ENCODE measurements at regions of chr13 and their contacts with region 1.

Region 1: DNA sequence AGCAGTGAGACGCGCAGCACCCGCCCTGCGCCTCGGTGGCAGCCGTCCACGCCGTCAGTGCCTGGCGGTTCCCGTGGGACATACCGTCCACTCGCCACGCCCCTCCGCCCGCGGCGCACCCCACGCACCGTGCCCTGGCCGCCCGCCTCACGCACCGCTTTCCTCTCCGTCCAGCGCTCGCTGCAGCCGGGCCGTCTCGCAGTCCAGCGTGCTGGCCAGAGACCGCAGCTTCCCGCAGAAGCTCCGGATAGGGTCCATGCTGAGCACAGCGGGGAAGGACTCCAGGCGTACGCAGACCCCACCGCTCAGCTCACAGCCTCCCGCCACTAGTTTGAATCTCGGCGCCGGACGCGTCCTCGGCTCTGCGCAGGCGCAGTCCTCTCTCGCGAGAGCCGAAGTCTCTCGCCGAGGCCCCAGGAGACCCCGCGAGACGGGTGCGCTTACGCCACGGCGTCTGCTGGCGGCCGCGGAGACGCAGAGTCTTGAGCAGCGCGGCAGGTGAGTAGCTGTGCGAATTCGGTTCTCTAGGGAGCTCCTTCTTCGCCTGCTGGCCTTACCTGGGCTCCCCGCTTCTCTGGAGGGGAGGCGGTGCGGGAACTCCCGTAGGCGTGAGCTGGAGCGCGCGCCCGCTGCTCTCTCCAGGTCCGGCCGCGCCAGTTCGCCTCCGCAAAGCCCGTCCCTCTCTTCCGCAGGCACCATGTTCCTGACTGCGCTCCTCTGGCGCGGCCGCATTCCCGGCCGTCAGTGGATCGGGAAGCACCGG is at the starts of genes MRPL57 and SKA3:
- DNase-seq: peak; percentile 95
- H3K4me3 Mint-ChIP-seq: peak within 1 kb of the TSS; percentile 99
- H3K27ac Mint-ChIP-seq: peak within 1 kb of the TSS; percentile 93
- H3K4me1 Mint-ChIP-seq: peaks cover 44% of the 10 kb centered on the region
- H3K27me3 Mint-ChIP-seq: no peaks in the 10 kb centered on the region
- total RNA-seq, gene MRPL57: 18.2 to 18.5 TPM
- total RNA-seq, gene SKA3: 33.2 to 34.7 TPM

Region 2: GRCh38 chr13:20773194-20774080 is 403.0 kb before region 1 on chr13 and contains the start of gene EEF1AKMT1:
- CTCF ChIA-PET with region 1: no interaction called
- POLR2A ChIA-PET with region 1: interaction called, 10 read pairs
- DNase-seq: peak; percentile 95
- H3K4me3 Mint-ChIP-seq: peak within 1 kb of the TSS; percentile 80
- H3K27ac Mint-ChIP-seq: peak within 1 kb of the TSS; percentile 99
- H3K4me1 Mint-ChIP-seq: peaks cover 35% of the 10 kb centered on the region
- H3K27me3 Mint-ChIP-seq: no peaks in the 10 kb centered on the region
- total RNA-seq, gene EEF1AKMT1: 7.9 TPM

Region 3: DNA sequence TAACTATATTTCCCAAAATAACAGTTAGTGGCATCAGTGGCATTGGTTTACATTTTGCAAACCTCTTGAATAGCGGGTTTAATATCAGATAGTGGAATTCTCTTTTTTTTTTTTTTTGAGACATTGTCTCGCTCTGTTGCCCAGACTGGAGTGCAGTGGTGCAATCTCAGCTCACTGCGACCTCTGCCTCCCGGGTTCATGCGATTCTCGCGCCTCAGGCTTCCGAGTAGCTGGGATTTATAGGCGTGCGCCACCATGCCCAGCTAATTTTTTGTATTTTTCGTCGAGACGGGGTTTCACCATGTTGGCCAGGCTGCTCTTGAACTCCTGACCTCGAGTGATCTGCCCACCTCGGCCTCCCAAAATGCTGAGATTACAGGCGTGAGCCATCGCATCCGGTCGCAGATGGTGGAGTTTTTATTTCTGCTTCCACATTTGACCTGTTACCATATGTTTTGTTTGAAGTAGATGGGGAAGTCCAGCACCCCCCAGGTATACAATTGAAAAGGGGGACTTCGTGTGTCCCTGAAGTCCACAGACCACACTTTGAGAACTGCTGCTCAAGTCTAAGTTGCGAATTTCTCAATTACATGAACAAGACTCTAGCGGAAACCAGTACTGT is 233.4 kb before region 1 on chr13:
- CTCF ChIA-PET with region 1: interaction called, 23 read pairs
- POLR2A ChIA-PET with region 1: interaction called, 3 read pairs
- DNase-seq: no peak
- H3K4me3 Mint-ChIP-seq: no peak overlapping the region
- H3K27ac Mint-ChIP-seq: no peak overlapping the region
- H3K4me1 Mint-ChIP-seq: peaks cover 12% of the 10 kb centered on the region
- H3K27me3 Mint-ChIP-seq: peaks cover 34% of the 10 kb centered on the region

Region 4: DNA sequence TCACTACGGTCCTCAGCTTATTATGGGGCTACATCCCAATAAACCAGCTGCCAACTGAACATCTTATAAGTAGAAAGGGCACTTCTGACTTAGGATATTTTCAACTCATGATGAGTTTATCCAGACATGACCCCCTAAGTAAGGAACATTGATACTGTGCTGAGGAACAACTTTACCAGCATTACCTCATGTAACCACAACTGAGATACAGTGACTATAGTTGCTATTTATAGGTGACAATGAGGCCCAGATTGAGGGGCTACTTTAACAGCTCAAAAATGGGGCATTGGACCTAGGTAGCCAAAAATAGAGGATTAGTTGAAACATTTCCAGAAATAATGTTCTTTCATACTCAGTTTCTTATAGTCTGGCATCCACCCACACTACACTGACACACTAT is 26.8 kb before region 1 on chr13:
- CTCF ChIA-PET with region 1: no interaction called
- POLR2A ChIA-PET with region 1: interaction called, 23 read pairs
- DNase-seq: no peak
- H3K4me3 Mint-ChIP-seq: no peak overlapping the region
- H3K27ac Mint-ChIP-seq: no peak overlapping the region
- H3K4me1 Mint-ChIP-seq: peaks cover under 1% of the 10 kb centered on the region
- H3K27me3 Mint-ChIP-seq: no peaks in the 10 kb centered on the region

Region 5: DNA sequence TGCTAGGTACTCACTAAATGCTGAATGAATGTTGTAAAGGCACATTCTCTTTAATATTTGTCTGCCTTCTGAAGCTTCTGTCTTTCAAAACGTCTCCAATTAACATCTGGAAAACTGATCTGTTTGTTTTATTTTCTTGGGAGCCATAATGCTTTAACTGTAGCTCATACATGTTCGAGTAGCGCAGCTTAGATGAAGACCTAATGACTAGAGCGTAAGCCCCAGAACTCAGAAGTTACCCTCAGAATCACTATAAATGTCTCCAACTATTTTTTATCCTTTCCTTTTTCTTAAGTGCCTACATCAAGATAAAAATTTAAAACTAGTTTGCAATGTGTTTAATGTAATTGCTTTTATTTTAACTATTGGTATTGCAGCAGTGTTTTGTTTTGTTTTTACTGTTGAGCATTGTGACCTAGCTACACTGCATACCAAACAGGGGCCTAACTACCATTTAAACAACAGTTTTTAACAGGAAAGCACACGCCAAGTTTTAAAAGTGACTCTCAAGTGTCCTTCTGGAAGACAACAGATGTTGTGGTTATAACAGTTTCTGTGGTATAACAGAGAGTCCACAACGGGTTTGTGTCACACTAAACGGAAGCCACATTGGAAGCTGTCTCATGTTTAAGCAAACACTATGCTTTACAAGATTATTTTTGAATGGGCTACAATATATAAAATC is 42.1 kb after region 1 on chr13:
- CTCF ChIA-PET with region 1: interaction called, 12 read pairs
- POLR2A ChIA-PET with region 1: interaction called, 24 read pairs
- DNase-seq: peak; percentile 49
- H3K4me3 Mint-ChIP-seq: peak overlapping the region; percentile 19
- H3K27ac Mint-ChIP-seq: peak overlapping the region; percentile 67
- H3K4me1 Mint-ChIP-seq: peaks cover 20% of the 10 kb centered on the region
- H3K27me3 Mint-ChIP-seq: peaks cover 51% of the 10 kb centered on the region

Region 6: DNA sequence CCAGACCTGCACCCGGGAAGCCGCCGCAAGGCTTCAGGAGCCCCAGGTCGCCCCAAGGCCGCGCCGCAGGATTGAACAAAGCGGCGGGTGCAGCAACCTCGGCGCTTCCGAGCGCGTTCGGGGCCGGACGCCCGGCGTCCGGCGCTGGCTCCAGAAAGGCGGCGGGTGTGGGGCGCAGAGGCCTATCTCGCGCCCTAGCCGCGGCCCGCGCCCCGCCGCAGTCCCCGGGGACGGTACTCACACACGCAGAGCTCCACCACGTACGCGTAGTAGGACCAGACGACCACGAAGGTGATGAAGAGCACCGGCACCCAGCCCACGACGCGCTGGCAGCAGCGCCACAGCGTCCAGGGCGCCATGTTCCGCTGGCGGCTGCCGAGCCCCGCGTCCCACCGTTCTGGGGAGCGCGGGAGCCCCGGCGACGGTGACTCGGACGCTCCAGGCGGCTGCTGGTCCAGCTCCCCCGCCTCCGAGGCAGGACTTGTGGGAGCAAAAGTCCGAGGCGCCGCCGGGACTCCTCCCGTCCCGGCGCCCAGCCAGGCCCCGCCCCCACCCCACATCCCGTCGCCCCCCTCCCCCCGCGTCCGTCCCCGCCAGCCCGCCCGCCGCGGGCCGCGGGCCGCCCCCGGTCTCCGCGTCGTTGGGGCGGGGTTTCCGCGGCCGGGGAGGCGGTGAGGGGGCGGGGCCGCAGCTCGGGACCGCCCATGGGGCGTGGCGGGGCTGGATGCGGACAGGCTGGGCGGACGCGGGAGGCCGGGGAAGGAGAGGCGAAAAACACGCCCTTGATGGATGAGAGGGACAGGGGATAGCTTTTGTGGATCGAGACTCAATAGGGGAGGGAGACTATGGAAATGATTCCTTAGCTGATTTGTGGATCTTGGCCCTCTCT is 282.7 kb after region 1 on chr13 and contains the start of gene ZDHHC20:
- CTCF ChIA-PET with region 1: no interaction called
- POLR2A ChIA-PET with region 1: interaction called, 27 read pairs
- DNase-seq: peak; percentile 91
- H3K4me3 Mint-ChIP-seq: peak within 1 kb of the TSS; percentile 85
- H3K27ac Mint-ChIP-seq: peak within 1 kb of the TSS; percentile 91
- H3K4me1 Mint-ChIP-seq: peaks cover 34% of the 10 kb centered on the region
- H3K27me3 Mint-ChIP-seq: no peaks in the 10 kb centered on the region
- total RNA-seq, gene ZDHHC20: 92.0 to 103 TPM

Region 7: DNA sequence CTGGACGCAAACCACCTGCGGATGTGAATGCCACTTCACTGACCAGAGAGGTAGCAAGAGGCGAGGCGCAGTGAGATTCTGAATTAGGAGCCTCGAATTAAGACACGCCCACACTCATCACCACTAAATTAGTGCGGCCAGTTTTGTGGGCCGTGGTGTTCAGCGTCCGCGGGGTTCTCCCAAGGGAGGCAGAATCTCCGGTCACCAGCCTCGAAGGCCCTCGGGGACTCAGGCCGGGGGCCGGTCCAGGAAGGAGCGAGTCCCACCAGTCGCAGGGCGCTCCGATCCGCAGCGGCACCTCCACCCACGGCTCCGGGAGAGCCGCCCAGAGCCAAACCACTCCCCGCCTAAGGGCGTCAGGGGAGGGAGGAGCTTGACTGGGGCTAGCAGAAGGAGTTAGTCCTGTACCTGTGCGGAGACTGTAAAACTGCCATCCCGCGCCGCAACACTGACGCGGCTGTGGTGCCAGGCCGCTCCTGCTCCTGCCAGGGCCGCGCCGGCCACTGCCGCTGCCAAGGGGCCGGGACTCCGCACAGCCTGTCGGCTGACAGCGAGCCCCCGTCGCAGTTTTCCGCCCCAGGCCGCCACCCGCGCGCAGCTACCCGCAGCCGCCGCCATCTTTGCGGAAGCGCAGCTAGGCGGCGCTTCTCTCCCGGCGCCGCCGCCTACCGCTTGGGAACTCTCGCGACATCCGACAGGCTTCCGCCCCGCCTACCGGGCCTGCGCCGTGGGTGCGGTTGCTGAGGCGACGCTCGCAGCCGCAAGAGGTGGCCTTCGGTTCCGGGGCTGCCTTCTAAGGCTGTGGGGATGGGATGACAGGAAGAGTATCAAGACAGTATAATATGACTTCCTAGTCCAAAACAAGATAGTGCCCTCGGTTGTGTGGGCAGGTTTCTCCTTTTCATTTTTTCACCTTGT is 427.4 kb after region 1 on chr13 and contains the start of gene MICU2:
- CTCF ChIA-PET with region 1: no interaction called
- POLR2A ChIA-PET with region 1: interaction called, 17 read pairs
- DNase-seq: peak; percentile 96
- H3K4me3 Mint-ChIP-seq: peak within 1 kb of the TSS; percentile 85
- H3K27ac Mint-ChIP-seq: peak within 1 kb of the TSS; percentile 79
- H3K4me1 Mint-ChIP-seq: peaks cover 35% of the 10 kb centered on the region
- H3K27me3 Mint-ChIP-seq: peaks cover 17% of the 10 kb centered on the region
- total RNA-seq, gene MICU2: 33.8 to 34.0 TPM